ENCODE measurements at regions of chr7 and their contacts with region 1.

Region 1: DNA sequence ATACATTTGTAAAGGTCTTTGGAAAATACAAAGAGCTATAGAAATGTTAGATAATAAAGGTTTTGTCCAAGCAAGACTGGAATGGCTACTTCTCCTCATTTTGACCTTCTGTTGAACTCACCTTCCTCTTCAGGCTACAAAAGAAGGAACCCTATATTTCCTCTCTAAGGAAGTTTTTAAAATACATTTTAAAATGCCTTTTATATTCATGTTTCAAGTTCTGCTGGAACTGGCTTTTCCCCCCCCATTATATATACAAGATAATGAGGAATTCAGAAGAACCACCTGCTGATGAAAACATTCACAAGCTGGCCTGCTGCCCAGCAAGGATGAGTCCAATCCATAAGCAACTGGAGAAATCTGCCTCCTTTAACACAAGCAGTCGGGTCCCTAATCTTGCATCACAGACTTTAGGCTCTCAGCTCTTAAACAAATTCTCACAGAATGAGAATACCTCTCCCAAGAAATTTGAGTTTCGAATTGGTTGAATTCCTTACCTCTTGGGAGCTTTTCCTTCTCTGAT is 44.6 kb downstream of the MTERF1 start:
- DNase-seq: no peak
- H3K4me3 Mint-ChIP-seq: no peak overlapping the region
- H3K27ac Mint-ChIP-seq: peak overlapping the region; percentile 23
- H3K4me1 Mint-ChIP-seq: peaks cover 11% of the 10 kb centered on the region
- H3K27me3 Mint-ChIP-seq: no peaks in the 10 kb centered on the region
- CTCF ChIP-seq: no peak

Region 2: DNA sequence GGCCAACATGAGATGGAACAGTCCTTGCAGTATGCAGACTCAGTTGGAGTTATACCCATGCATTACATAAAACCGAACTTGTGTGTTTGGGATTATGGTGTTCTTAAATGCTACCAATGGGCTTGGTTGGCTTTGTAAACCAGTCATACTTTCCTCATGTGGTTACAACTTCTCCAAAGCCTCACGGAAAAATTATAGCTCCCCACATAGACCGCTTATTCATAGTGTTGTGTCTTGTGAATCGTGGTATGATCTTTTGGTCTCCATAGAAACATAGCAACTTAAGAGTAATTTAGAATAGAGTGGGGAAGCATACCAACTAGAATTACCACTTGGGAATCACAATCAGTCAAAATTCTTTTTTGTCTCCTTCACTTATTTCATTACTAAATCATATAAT is 684.0 kb before region 1 on chr7:
- CTCF ChIA-PET with region 1: no interaction called
- intact Hi-C with region 1: no loop called
- DNase-seq: no peak
- H3K4me3 Mint-ChIP-seq: no peak overlapping the region
- H3K27ac Mint-ChIP-seq: no peak overlapping the region
- H3K4me1 Mint-ChIP-seq: no peaks in the 10 kb centered on the region
- H3K27me3 Mint-ChIP-seq: no peaks in the 10 kb centered on the region
- CTCF ChIP-seq: no peak

Region 3: DNA sequence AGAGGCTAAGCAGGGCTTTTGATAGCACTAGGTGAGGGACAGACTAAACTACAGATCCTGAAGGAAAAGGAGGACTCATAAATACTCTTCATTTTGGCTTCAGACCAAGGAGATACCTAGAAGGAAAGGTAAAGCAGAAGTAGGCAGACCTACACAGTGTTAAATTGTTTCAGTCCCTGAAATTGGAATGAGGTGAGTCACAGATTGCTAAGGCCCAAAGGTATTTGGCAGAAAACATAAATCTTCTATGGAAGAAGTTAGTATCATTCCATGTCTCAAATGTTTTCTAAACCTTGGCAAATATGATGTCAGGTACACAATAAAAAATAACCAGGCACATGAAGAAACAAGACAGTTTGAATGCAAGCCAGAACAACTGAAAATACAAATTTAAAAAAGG is 14.5 kb after region 1 on chr7:
- CTCF ChIA-PET with region 1: interaction called, 3 read pairs
- intact Hi-C with region 1: loop called (anchors 2 kb)
- DNase-seq: no peak
- H3K4me3 Mint-ChIP-seq: no peak overlapping the region
- H3K27ac Mint-ChIP-seq: no peak overlapping the region
- H3K4me1 Mint-ChIP-seq: peaks cover 18% of the 10 kb centered on the region
- H3K27me3 Mint-ChIP-seq: no peaks in the 10 kb centered on the region
- CTCF ChIP-seq: no peak

Region 4: GRCh38 chr7:91869661-91870060 is 33.8 kb after region 1 on chr7:
- CTCF ChIA-PET with region 1: no interaction called
- intact Hi-C with region 1: loop called (anchors 5 kb)
- DNase-seq: no peak
- H3K4me3 Mint-ChIP-seq: no peak overlapping the region
- H3K27ac Mint-ChIP-seq: no peak overlapping the region
- H3K4me1 Mint-ChIP-seq: no peaks in the 10 kb centered on the region
- H3K27me3 Mint-ChIP-seq: no peaks in the 10 kb centered on the region
- CTCF ChIP-seq: no peak

Region 5: DNA sequence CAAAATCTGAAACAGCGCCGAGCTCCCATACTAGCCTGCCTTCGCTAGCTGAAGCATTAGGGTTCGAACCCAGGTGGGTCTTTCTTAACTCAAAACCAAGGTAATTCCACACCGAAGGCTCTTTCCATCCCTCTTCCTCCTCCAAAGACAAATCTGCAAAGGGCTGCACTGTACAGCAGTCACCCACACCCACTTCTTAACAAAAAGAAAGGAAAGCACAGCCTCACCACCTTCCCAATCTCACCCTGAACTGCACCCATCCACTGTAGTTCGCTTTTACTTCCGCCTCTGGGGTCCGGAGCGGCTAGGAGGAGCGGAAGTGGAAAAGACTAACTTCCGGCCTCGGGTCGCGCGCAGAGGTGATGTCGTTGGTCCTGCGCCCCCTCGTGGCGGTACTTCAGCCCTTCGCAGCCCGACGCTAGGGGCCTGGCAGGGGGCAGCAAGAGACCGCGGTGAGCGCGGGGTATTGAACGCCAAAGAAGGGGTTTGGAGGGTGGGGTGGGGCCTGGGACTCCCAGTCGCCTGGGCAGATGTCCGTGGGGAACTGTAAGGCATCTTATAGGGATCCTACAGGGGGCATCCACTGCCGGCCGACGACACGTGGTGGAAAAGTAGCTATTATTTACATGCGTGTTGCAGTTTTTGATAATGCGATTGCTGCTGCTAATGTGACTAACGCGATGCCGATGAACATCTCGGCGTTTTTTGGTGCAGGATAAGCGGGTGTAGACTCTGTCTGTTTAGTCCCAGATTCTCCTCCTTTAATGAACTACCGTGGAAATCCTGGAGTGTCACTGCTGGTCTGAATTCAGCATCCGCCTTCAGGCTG is 44.7 kb after region 1 on chr7 and contains the start of gene MTERF1:
- CTCF ChIA-PET with region 1: no interaction called
- intact Hi-C with region 1: loop called (anchors 2 kb)
- DNase-seq: peak; percentile 89
- H3K4me3 Mint-ChIP-seq: peak within 1 kb of the TSS; percentile 91
- H3K27ac Mint-ChIP-seq: peak within 1 kb of the TSS; percentile 93
- H3K4me1 Mint-ChIP-seq: peaks cover 21% of the 10 kb centered on the region
- H3K27me3 Mint-ChIP-seq: no peaks in the 10 kb centered on the region
- CTCF ChIP-seq: peak; percentile 89
- total RNA-seq, gene MTERF1: 11.5 and 15.8 TPM in 2 replicates